Breast epithelium (tissue), 4 donors: ENCODE measurements at regions of chr5 and their contacts with region 1.

Region 1: GRCh38 chr5:151523335-151523734 is 67.8 kb downstream of the FAT2 start:
- DNase-seq: no peak
- H3K4me3 ChIP-seq: no peak overlapping the region
- H3K27ac ChIP-seq: no peak overlapping the region
- H3K4me1 ChIP-seq: no peaks in the 10 kb centered on the region
- H3K27me3 ChIP-seq: no peaks in the 10 kb centered on the region
- CTCF ChIP-seq: peak in 2 of 3 donors; percentile 15 to 25
- POLR2A ChIP-seq: no peak

Region 2: GRCh38 chr5:151592855-151593408 is 69.6 kb after region 1 on chr5:
- intact Hi-C with region 1: no loop called
- DNase-seq: no peak
- H3K4me3 ChIP-seq: no peak overlapping the region
- H3K27ac ChIP-seq: peak overlapping the region; percentile 21 to 32
- H3K4me1 ChIP-seq: no peaks in the 10 kb centered on the region
- H3K27me3 ChIP-seq: no peaks in the 10 kb centered on the region
- CTCF ChIP-seq: no peak
- POLR2A ChIP-seq: no peak

Region 3: GRCh38 chr5:152349683-152350526 is 826.6 kb after region 1 on chr5:
- intact Hi-C with region 1: no loop called
- DNase-seq: no peak
- H3K4me3 ChIP-seq: no peak overlapping the region
- H3K27ac ChIP-seq: no peak overlapping the region
- H3K4me1 ChIP-seq: no peaks in the 10 kb centered on the region
- H3K27me3 ChIP-seq: no peaks in the 10 kb centered on the region
- CTCF ChIP-seq: peak; percentile 31 to 64 (median 35)
- POLR2A ChIP-seq: no peak

Region 4: GRCh38 chr5:153513156-153513555 is 1989.8 kb after region 1 on chr5:
- intact Hi-C with region 1: loop called (anchors 5 kb)
- DNase-seq: no peak
- H3K4me3 ChIP-seq: peak overlapping the region in 1 of 3 donors; percentile 23
- H3K27ac ChIP-seq: peak overlapping the region in 1 of 2 donors; percentile 1
- H3K4me1 ChIP-seq: no peaks in the 10 kb centered on the region
- H3K27me3 ChIP-seq: no peaks in the 10 kb centered on the region
- CTCF ChIP-seq: no peak
- POLR2A ChIP-seq: no peak